ENCODE measurements at regions of chr12 and their contacts with region 1.

Region 1: GRCh38 chr12:98998697-98999299 is 353.7 kb downstream of the APAF1 start:
- DNase-seq: peak in 2 of 9 experiments; percentile 3 to 9
- ATAC-seq: no peak
- H3K4me3 ChIP-seq: no peak overlapping the region
- H3K4me3 Mint-ChIP-seq: no peak overlapping the region
- H3K27ac ChIP-seq: no peak overlapping the region
- H3K27ac Mint-ChIP-seq: no peak overlapping the region
- H3K4me1 ChIP-seq: no peaks in the 10 kb centered on the region
- H3K4me1 Mint-ChIP-seq: no peaks in the 10 kb centered on the region
- H3K27me3 ChIP-seq: no peaks in the 10 kb centered on the region
- H3K27me3 Mint-ChIP-seq: peaks cover 5% of the 10 kb centered on the region
- CTCF ChIP-seq: peak; percentile 24

Region 2: DNA sequence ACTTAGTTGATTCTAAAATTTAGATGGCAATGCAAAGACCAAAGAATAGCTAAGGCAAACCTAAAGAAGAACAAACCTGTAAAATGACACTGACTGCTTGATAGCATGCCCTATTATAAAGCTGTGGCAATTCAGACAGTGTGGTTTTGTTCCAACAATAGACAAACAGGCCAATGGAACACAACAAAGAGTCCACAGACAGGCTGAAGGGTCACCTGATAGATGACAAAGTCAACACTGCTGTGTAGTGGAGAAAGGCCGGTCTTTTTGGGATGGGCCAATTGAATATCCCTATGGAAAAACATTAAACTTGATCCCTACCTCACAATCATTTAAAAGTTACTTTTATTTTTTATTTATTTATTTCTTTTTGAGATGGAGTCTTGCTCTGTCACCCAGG is 439.1 kb before region 1 on chr12:
- CTCF ChIA-PET with region 1: no interaction called
- POLR2A ChIA-PET with region 1: no interaction called
- intact Hi-C with region 1: loop called in 1 of 2 experiments (anchors 10 kb)
- DNase-seq: no peak
- ATAC-seq: no peak
- H3K4me3 ChIP-seq: no peak overlapping the region
- H3K4me3 Mint-ChIP-seq: no peak overlapping the region
- H3K27ac ChIP-seq: no peak overlapping the region
- H3K27ac Mint-ChIP-seq: no peak overlapping the region
- H3K4me1 ChIP-seq: no peaks in the 10 kb centered on the region
- H3K4me1 Mint-ChIP-seq: no peaks in the 10 kb centered on the region
- H3K27me3 ChIP-seq: no peaks in the 10 kb centered on the region
- H3K27me3 Mint-ChIP-seq: no peaks in the 10 kb centered on the region
- CTCF ChIP-seq: no peak

Region 3: DNA sequence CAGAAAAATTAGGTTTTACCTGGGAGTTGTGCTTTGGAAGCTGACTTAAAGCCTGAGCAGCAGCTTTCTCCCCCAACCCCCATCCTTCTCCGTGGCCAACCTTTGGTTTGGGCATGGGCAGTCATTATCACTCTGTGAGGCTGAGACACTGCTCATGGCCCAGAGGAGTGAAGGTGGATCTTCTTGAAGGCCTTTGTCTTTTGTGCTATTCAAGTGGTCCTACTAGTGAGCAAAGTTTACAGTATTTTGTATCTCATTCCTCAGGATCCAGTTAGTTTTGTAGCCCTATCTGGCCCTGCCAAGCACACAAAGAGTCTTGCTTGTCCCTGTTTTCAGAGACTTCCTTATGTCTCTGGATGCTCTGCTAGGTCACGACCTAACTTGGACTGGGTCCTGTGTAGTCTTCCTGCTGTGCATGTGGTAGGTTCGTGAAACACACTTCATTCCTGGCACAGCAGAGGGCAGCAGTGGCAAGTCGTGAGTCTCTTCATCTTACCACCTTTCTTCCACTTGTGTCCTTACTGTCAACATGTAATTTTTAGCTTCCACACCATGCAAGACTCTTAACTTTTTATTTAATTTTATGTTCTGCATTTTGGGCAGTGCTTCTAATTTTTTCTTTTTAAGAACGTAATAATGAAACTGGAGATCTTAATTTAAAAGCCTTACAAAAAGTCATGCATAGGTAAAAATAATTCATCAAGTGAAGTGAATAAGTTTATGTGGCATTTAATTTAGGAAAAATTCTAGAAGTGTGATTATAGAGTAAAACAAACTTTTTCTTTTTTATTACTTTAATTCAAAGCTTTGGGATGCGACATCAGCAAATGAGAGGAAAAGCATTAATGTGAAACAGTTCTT is 300.0 kb before region 1 on chr12:
- CTCF ChIA-PET with region 1: no interaction called
- POLR2A ChIA-PET with region 1: no interaction called
- intact Hi-C with region 1: loop called in 1 of 2 experiments (anchors 5 kb)
- DNase-seq: peak in 7 of 9 experiments; percentile 2 to 50 (median 19)
- ATAC-seq: peak; percentile 63
- H3K4me3 ChIP-seq: no peak overlapping the region
- H3K4me3 Mint-ChIP-seq: no peak overlapping the region
- H3K27ac ChIP-seq: no peak overlapping the region
- H3K27ac Mint-ChIP-seq: no peak overlapping the region
- H3K4me1 ChIP-seq: no peaks in the 10 kb centered on the region
- H3K4me1 Mint-ChIP-seq: peaks cover 9% of the 10 kb centered on the region
- H3K27me3 ChIP-seq: no peaks in the 10 kb centered on the region
- H3K27me3 Mint-ChIP-seq: no peaks in the 10 kb centered on the region
- CTCF ChIP-seq: peak; percentile 41

Measured in CD8-positive, alpha-beta T cell (primary cell).